ENCODE measurements at regions of chr7 and their contacts with region 1.

Region 1: DNA sequence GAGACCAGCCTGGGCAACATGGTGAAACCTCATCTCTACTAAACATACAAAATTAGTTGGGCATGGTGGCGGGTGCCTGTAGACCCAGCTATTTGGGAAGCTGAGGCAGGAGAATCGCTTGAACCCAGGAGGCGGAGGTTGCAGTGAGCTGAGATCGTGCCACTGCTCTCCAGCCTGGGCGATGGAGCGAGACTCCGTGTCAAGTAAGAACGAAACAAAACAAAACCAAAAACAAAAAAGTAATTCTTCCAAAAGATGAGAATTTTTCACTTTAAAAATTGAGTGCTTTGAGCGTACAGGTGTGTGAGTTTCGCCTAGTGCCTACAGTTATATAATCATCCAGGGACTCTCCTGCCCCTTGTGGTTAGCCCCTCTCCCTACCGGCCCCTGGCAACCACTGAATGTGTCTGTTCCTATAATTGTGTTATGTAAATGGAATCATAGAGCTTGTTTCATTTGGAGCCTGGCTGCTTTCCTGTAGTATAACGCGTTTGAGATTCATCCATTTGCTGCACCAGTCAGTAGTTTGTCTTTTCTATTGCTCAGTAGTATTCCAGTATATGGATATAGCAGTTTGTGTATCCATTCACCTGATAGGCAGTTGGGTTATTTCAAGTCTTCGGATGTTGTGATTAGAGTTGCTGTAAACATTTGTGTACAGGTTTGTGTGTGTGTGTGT is 80.0 kb downstream of the RBM33 start:
- DNase-seq: peak in 1 of 2 donors; percentile 16
- ATAC-seq: no peak
- H3K4me3 ChIP-seq: no peak overlapping the region
- H3K4me3 Mint-ChIP-seq: no peak overlapping the region
- H3K27ac ChIP-seq: peak overlapping the region; percentile 35
- H3K27ac Mint-ChIP-seq: peak overlapping the region in 1 of 2 donors; percentile 33
- H3K4me1 ChIP-seq: peaks cover 3% of the 10 kb centered on the region
- H3K4me1 Mint-ChIP-seq: peaks cover 44 to 55% of the 10 kb centered on the region in 2 donors
- H3K27me3 ChIP-seq: no peaks in the 10 kb centered on the region
- H3K27me3 Mint-ChIP-seq: no peaks in the 10 kb centered on the region
- CTCF ChIP-seq: no peak

Region 2: GRCh38 chr7:155676052-155676451 is 48.4 kb before region 1 on chr7:
- intact Hi-C with region 1: loop called (anchors 5 kb)
- DNase-seq: no peak
- ATAC-seq: peak in 1 of 3 donors; percentile 27
- H3K4me3 ChIP-seq: no peak overlapping the region
- H3K4me3 Mint-ChIP-seq: peak overlapping the region; percentile 28
- H3K27ac ChIP-seq: no peak overlapping the region
- H3K27ac Mint-ChIP-seq: peak overlapping the region; percentile 82 to 87
- H3K4me1 ChIP-seq: peaks cover 14% of the 10 kb centered on the region
- H3K4me1 Mint-ChIP-seq: peaks cover 36 to 47% of the 10 kb centered on the region in 2 donors
- H3K27me3 ChIP-seq: no peaks in the 10 kb centered on the region
- H3K27me3 Mint-ChIP-seq: no peaks in the 10 kb centered on the region
- CTCF ChIP-seq: no peak

Region 3: DNA sequence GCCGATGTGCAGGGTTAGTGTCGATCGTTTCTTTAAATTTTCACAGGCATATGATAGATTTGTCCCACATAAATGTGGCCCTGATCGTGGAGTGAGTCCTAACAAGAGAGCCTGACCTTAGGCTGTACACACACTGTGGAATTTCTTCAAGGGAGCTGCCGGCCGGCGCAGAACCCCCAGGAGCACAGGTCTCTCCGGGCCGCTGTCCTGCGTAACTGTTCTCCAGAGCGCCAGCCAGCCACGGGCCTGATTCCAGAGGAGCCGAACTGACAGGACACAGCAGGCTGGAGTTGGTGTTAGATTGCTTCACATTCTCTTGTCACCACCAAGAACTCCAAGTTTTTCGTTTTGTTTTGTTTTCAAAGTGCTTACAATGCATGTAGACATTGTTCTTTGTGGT is 50.5 kb after region 1 on chr7:
- intact Hi-C with region 1: no loop called
- DNase-seq: no peak
- ATAC-seq: no peak
- H3K4me3 ChIP-seq: no peak overlapping the region
- H3K4me3 Mint-ChIP-seq: no peak overlapping the region
- H3K27ac ChIP-seq: no peak overlapping the region
- H3K27ac Mint-ChIP-seq: no peak overlapping the region
- H3K4me1 ChIP-seq: no peaks in the 10 kb centered on the region
- H3K4me1 Mint-ChIP-seq: peaks cover 0 to 10% of the 10 kb centered on the region in 2 donors
- H3K27me3 ChIP-seq: no peaks in the 10 kb centered on the region
- H3K27me3 Mint-ChIP-seq: no peaks in the 10 kb centered on the region
- CTCF ChIP-seq: no peak